AG04450 (cell line): ENCODE measurements at regions of chr17 and their contacts with region 1.

Region 1: GRCh38 chr17:29640413-29640812 is 17.7 kb upstream of the CORO6 start:
- DNase-seq: peak; percentile 27
- H3K4me3 ChIP-seq: no peak overlapping the region
- H3K27ac ChIP-seq: peak overlapping the region; percentile 68
- H3K27me3 ChIP-seq: no peaks in the 10 kb centered on the region
- CTCF ChIP-seq: no peak

Region 2: GRCh38 chr17:29653995-29654714 is 13.7 kb after region 1 on chr17:
- CTCF ChIA-PET with region 1: interaction called, 10 read pairs
- POLR2A ChIA-PET with region 1: interaction called, 3 read pairs
- DNase-seq: no peak
- H3K4me3 ChIP-seq: no peak overlapping the region
- H3K27ac ChIP-seq: no peak overlapping the region
- H3K27me3 ChIP-seq: no peaks in the 10 kb centered on the region
- CTCF ChIP-seq: no peak

Region 3: GRCh38 chr17:29699283-29699682 is 58.9 kb after region 1 on chr17:
- CTCF ChIA-PET with region 1: interaction called, 7 read pairs
- POLR2A ChIA-PET with region 1: interaction called, 11 read pairs
- DNase-seq: no peak
- H3K4me3 ChIP-seq: no peak overlapping the region
- H3K27ac ChIP-seq: no peak overlapping the region
- H3K27me3 ChIP-seq: no peaks in the 10 kb centered on the region
- CTCF ChIP-seq: no peak

Region 4: GRCh38 chr17:30886187-30886586 is 1245.8 kb after region 1 on chr17:
- CTCF ChIA-PET with region 1: no interaction called
- POLR2A ChIA-PET with region 1: no interaction called
- DNase-seq: no peak
- H3K4me3 ChIP-seq: no peak overlapping the region
- H3K27ac ChIP-seq: no peak overlapping the region
- H3K27me3 ChIP-seq: no peaks in the 10 kb centered on the region
- CTCF ChIP-seq: no peak